Panc1 (cell line): ENCODE measurements at regions of chr2 and their contacts with region 1.

Region 1: DNA sequence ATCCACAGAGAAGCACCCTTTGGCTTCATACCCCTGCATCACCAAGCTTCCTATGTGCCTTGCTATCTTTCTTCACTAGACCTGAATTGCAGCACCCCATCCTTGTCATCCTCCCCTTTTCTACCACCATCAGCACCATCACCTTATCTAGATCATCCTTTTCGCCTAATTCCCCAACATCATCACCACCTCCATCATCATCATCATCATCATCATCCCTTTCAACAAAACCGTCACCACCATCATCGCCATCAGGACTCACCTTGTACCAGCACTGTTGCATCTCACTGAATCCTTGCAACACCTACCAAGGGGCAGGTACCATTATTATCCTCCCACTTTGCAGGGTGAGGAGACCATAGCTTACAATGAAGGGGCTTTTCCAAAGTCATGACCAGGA is 10.8 kb upstream of the ECEL1 start:
- DNase-seq: no peak
- ATAC-seq: no peak
- H3K4me3 ChIP-seq: no peak overlapping the region
- H3K27ac ChIP-seq: no peak overlapping the region
- H3K4me1 ChIP-seq: no peaks in the 10 kb centered on the region; the same call in 1 of the 2 replicates
- H3K27me3 ChIP-seq: no peaks in the 10 kb centered on the region
- CTCF ChIP-seq: no peak

Region 2: GRCh38 chr2:231732604-231733003 is 765.8 kb before region 1 on chr2:
- CTCF ChIA-PET with region 1: no interaction called
- POLR2A ChIA-PET with region 1: interaction called, 10 read pairs
- in situ Hi-C with region 1: no loop called
- intact Hi-C with region 1: no loop called
- DNase-seq: no peak
- ATAC-seq: no peak
- H3K4me3 ChIP-seq: no peak overlapping the region
- H3K27ac ChIP-seq: no peak overlapping the region
- H3K4me1 ChIP-seq: no peaks in the 10 kb centered on the region
- H3K27me3 ChIP-seq: no peaks in the 10 kb centered on the region
- CTCF ChIP-seq: no peak